ENCODE measurements at regions of chr21 and their contacts with region 1.

Region 1: DNA sequence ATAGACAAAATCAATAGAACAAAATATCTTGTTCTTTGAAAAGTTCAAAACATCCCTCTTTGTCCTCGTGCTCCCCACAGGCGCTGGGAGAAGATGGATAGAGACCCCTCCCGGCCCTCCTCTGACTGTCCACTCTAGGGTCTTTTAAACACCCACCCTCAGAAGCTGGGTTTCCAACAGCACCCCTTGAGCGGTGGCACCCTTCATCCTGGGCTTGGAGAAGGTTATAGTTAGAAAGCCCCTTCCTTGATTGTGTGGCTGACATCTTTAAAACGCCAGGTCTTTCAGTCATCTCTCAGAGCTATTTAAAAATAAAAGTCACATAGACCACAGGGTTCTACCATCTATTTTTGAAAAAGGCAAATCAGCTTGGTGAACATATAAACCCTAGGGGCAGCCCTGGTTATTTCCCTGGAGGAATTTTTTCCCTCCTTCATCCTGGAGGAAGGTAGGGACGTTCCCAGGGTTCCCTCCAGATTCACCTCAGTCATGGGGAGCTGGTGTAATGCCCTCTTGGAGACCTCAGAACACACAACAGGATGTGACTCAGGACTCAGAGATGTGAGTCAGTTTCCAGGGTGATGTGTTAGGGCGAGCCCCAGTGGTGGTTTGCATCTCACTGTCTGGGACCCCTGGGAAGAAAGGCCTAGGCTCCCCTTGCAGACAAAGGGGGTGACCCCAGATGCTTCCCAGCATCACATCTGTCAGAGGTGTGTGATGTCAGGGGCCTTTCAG is 138.5 kb downstream of the CLIC6 start:
- DNase-seq: peak; percentile 94
- H3K4me3 ChIP-seq: no peak overlapping the region
- H3K27ac ChIP-seq: peak overlapping the region; percentile 100
- H3K4me1 ChIP-seq: peaks cover 37% of the 10 kb centered on the region
- H3K27me3 ChIP-seq: no peaks in the 10 kb centered on the region
- CTCF ChIP-seq: no peak
- POLR2A ChIP-seq: no peak

Region 2: DNA sequence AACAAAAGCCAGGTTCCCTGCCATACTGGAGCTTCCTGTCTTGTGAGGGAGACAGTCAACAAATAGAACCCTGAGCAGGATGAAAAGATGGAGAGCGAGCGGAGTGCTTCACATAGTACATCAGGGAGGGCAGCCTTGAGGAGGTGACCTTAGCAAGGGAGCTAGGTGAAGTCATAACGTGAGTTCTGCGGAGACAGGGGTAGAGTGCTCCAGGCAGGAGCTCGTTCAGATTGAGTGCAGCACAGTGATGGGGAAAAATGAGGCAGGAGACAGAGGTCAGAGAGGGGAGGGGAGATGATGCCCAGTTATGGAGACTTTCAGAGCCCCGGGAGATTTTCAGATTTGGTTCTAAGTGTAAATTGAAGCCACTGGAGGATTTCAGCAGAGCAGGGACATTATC is 153.8 kb before region 1 on chr21:
- CTCF ChIA-PET with region 1: no interaction called
- POLR2A ChIA-PET with region 1: no interaction called
- dilution Hi-C with region 1: no loop called
- intact Hi-C with region 1: no loop called
- DNase-seq: no peak
- H3K4me3 ChIP-seq: no peak overlapping the region
- H3K27ac ChIP-seq: no peak overlapping the region
- H3K4me1 ChIP-seq: no peaks in the 10 kb centered on the region
- H3K27me3 ChIP-seq: peaks cover 1 to 25% of the 10 kb centered on the region in 2 experiments
- CTCF ChIP-seq: no peak
- POLR2A ChIP-seq: no peak

Region 3: GRCh38 chr21:34836103-34836932 is 29.0 kb after region 1 on chr21:
- CTCF ChIA-PET with region 1: interaction called, 5 read pairs
- POLR2A ChIA-PET with region 1: interaction called, 8 read pairs
- dilution Hi-C with region 1: no loop called
- intact Hi-C with region 1: loop called (anchors 1 kb)
- DNase-seq: peak; percentile 98
- H3K4me3 ChIP-seq: peak overlapping the region in 1 of 3 experiments; percentile 3
- H3K27ac ChIP-seq: peak overlapping the region; percentile 78
- H3K4me1 ChIP-seq: peaks cover 30% of the 10 kb centered on the region
- H3K27me3 ChIP-seq: no peaks in the 10 kb centered on the region
- CTCF ChIP-seq: no peak
- POLR2A ChIP-seq: peak; percentile 26

Region 4: GRCh38 chr21:35690436-35690835 is 883.1 kb after region 1 on chr21:
- CTCF ChIA-PET with region 1: no interaction called
- POLR2A ChIA-PET with region 1: no interaction called
- dilution Hi-C with region 1: no loop called
- intact Hi-C with region 1: no loop called
- DNase-seq: no peak
- H3K4me3 ChIP-seq: no peak overlapping the region
- H3K27ac ChIP-seq: no peak overlapping the region
- H3K4me1 ChIP-seq: no peaks in the 10 kb centered on the region
- H3K27me3 ChIP-seq: peaks cover 45 to 47% of the 10 kb centered on the region in 2 experiments
- CTCF ChIP-seq: no peak
- POLR2A ChIP-seq: no peak